ENCODE measurements at regions of chr10 and their contacts with region 1.

Region 1: DNA sequence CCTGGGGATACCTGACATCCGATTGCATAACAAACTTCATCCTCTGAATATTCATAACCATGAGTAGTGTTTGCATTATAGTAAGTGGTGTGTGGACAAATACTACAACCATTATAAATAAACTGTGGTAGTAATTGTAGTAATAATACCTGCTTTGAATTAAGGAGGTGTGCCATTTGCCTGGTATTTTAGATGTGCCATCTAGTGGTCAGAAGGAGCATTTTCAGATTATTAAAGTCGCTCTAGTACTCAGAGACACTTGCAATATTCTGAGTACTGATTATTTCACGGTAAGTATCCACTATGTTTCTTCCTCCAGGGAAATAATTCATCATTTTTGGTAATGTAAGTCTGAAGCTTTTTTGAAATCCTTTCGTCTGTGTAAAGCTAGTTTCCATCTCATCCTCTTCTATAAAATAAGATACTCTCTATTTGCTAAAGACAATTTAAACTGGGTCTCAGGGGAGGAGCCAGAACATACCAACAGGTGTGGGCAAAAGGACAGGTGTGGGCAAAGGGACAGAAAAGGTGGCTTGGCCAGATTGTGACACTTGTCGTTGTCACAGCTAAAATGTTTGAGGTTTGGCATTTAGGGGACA is 115.3 kb upstream of the WDR11 start:
- DNase-seq: no peak
- H3K4me3 ChIP-seq: no peak overlapping the region
- CTCF ChIP-seq: peak; percentile 40

Region 2: GRCh38 chr10:120221873-120222485 is 513.9 kb before region 1 on chr10:
- CTCF ChIA-PET with region 1: interaction called, 20 read pairs
- POLR2A ChIA-PET with region 1: no interaction called
- DNase-seq: no peak
- H3K4me3 ChIP-seq: no peak overlapping the region
- CTCF ChIP-seq: peak; percentile 61

Region 3: DNA sequence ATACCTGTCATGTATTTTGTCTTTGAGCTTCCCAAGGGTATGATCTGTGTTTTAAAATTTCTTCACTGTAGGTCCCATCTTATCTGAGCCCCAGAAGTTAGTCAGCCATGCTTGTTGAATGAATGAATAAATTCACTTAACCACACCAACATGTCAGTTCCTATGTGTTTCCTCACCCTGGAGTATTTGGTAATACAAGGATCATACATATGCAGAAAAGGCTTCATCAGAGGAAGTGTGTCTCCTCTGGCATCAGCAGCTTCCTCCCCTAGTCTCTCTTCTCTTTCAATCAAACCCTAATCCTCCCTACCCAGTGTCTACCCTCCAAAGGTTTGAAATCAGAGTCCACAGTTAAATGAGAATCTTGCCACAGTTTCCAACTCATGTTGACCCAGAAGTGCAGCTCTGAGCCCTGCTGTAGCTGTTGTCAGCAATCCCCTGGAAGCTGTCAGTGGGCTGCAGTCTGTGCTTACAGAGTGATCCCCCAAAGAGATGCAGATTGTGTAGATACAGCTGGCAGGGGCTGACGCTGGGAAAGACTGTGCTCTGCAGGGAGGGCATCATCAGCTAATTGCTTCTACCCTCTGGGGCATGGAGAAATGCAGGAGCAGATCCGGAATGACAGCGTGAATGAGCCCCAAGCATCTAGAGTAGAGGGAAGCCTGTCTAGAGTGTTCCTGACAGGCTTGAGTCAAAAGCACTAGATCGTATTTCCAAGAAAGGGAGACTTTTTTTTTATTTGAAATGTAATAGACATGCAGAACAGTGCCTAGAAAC is 10.3 kb after region 1 on chr10:
- CTCF ChIA-PET with region 1: interaction called, 18 read pairs
- POLR2A ChIA-PET with region 1: no interaction called
- DNase-seq: no peak
- H3K4me3 ChIP-seq: no peak overlapping the region
- CTCF ChIP-seq: no peak

Region 4: DNA sequence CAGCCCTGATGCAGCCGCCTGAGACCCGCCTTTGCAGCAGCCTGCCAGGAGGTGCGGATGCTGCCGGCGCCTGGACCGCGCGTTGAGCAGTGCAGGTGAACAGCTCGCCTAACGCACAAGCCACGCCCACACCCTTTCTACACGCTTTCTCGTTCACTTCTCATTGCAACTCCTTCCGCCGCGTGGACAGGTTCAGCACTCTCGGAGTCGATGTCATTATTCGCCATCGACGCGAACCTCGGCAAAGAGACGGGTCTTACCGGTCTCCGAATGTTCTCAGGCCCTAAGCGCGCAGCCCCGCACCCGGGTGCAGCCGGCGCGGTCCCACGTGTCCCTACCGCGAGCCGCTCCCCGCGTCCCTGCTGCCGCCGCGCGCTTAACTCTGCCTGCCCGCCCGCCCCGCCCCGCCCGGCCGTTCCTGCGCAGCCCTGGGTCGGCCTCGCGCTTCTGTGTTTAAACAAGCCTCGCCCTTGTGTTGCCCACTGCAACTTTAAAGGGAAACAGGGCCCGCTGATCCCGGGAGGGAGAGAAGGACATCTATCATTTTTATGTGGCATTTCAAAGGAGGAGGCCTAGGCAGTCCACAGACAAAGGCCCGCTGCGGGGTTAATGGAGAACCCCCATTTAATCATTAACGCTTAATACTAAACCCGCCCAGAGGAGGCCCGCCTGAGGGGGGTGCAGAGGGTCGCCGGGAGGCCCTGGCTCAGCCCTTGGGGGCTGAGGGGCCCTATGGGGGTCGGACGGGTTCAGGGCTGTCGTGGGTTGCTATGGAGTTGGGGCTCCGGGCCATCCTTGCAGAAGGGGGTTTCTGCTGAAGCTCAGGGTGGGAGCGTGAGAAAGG is 243.8 kb after region 1 on chr10:
- CTCF ChIA-PET with region 1: no interaction called
- POLR2A ChIA-PET with region 1: no interaction called
- DNase-seq: no peak
- H3K4me3 ChIP-seq: peak overlapping the region; percentile 20; the same call in 1 of the 2 replicates
- CTCF ChIP-seq: no peak

Measured in AG04449 (cell line).